Sciatic nerve (tissue), 2 donors: ENCODE measurements at regions of chr9 and their contacts with region 1.

Region 1: GRCh38 chr9:74236857-74237256 is 260.3 kb upstream of the RORB start:
- DNase-seq: no peak
- ATAC-seq: no peak

Region 2: DNA sequence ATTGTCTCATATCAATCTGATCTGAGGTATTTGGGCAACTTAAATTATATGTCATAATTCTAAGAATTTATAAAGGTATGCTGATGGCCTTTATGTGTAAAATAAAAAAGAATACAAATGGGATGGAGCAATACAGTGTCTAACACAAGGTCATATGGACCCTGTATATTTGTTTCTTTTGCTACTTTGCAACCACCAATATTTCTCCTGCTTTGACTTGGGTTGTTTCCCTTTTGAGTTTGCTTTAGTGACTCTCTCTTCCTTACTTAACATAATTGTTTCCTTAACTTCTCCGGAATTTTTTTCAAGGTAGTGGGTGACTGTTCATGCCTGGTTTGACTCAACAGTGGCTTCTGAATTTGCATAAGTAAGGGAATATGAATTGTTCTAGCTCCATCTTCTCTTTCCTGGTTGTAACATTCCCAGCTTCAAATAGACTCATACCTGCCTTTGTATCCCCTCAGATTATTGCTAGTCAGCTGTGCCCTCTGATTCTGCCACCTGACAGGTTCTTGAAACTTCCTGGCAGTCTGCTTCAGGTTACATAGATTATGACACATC is 1115.4 kb before region 1 on chr9:
- intact Hi-C with region 1: loop called (anchors 5 kb)
- DNase-seq: no peak
- ATAC-seq: no peak

Region 3: GRCh38 chr9:74056023-74056422 is 180.8 kb before region 1 on chr9:
- intact Hi-C with region 1: no loop called
- DNase-seq: no peak
- ATAC-seq: no peak

Region 4: DNA sequence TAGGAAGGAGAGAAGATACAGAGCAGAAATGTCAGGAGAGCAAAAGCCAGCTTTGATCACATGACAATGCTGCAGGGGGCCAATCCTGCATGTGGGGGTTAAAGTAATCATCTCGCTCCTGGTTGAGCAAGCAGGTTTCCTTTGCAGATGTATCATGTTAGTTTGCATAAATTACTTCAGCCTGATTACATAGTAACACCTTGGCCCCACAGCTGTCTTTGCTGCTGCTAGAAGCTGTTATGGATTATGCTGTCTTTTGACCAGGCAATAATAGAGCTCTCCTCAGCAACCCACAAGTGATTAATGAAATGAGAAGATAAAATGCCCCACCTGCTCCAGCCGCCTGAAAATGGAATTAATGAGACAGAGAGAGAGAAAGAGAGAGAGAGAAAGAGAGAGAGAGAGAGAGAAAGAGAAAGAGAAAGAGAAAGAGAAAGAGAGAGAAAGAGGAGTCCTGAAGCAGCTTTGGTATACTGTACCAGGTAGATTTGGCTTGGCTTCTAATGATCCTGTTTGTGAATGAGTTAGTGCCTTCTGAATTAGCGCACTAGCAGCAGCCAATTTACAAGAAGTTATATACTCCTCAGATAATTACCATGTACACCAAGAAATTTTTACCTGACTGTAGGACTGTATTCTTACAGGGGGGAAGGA is 85.9 kb after region 1 on chr9:
- intact Hi-C with region 1: no loop called
- DNase-seq: no peak
- ATAC-seq: no peak